CD8-positive, alpha-beta T cell (primary cell): ENCODE measurements at regions of chr21 and their contacts with region 1.

Region 1: GRCh38 chr21:44927587-44928461 is 7.1 kb upstream of the ITGB2 start:
- DNase-seq: peak; percentile 59 to 96 (median 90)
- ATAC-seq: peak; percentile 78
- H3K4me3 ChIP-seq: peak overlapping the region; percentile 68 to 92
- H3K4me3 Mint-ChIP-seq: peak overlapping the region; percentile 91
- H3K27ac ChIP-seq: peak overlapping the region; percentile 75 to 79
- H3K27ac Mint-ChIP-seq: peak overlapping the region; percentile 96
- H3K4me1 ChIP-seq: peaks cover 82% of the 10 kb centered on the region
- H3K4me1 Mint-ChIP-seq: peaks cover 76% of the 10 kb centered on the region
- H3K27me3 ChIP-seq: no peaks in the 10 kb centered on the region
- H3K27me3 Mint-ChIP-seq: no peaks in the 10 kb centered on the region
- CTCF ChIP-seq: no peak

Region 2: DNA sequence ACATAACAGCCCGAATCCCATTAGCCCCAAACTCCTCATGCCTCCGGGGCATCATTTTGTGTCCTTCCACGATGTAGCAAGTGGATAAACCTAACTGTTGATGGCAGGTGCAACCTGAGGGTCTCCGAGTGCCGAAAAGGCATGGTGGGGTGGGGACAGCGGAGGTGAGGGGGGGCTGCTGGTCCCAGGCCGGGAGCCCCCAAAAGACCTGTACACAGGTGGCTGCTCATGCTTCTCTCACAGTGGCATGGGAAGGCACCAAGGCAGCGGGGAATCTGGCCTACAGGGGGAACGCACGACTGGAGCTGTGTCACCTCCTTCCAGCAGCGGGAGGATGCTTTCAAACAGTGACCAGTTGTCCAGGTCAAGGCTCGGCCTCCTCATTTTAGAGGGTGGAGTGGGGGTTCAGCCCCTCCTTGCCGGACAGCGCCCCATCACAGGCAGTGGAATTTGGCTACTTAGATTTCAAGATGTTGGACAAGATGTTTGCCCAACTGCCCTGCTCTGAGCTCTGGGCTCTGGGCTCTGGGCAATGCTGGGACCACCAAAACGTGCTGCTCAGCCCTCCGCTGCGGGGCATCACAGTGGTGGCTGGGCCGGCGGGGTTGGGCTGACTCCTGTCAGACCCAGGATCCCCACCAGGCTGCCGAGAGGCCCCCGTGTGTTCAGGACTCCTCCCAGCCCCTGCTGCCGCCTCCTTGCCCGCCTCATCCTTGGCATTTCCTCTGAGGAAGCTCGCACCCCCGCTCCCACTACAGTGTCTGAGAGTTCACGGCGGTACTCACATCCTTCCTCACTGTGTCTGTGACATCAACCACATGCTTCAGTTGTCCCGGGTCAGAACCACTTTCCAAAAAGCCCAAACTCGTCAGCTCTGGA is 673.8 kb before region 1 on chr21:
- CTCF ChIA-PET with region 1: no interaction called
- POLR2A ChIA-PET with region 1: no interaction called
- intact Hi-C with region 1: no loop called
- DNase-seq: no peak
- ATAC-seq: no peak
- H3K4me3 ChIP-seq: no peak overlapping the region
- H3K4me3 Mint-ChIP-seq: no peak overlapping the region
- H3K27ac ChIP-seq: no peak overlapping the region
- H3K27ac Mint-ChIP-seq: no peak overlapping the region
- H3K4me1 ChIP-seq: no peaks in the 10 kb centered on the region
- H3K4me1 Mint-ChIP-seq: no peaks in the 10 kb centered on the region
- H3K27me3 ChIP-seq: peaks cover 0 to 2% of the 10 kb centered on the region in 2 experiments
- H3K27me3 Mint-ChIP-seq: peaks cover 3% of the 10 kb centered on the region
- CTCF ChIP-seq: no peak

Region 3: GRCh38 chr21:44657635-44658540 is 269.9 kb before region 1 on chr21 and contains the start of gene KRTAP12-3:
- CTCF ChIA-PET with region 1: no interaction called
- POLR2A ChIA-PET with region 1: no interaction called
- intact Hi-C with region 1: loop called in 1 of 2 experiments (anchors 2 kb)
- DNase-seq: peak; percentile 45 to 95 (median 70)
- ATAC-seq: peak; percentile 64
- H3K4me3 ChIP-seq: peak within 1 kb of the TSS; percentile 9 to 31
- H3K4me3 Mint-ChIP-seq: peak within 1 kb of the TSS; percentile 66
- H3K27ac ChIP-seq: peak within 1 kb of the TSS; percentile 63 to 88
- H3K27ac Mint-ChIP-seq: peak within 1 kb of the TSS; percentile 96
- H3K4me1 ChIP-seq: peaks cover 65% of the 10 kb centered on the region
- H3K4me1 Mint-ChIP-seq: peaks cover 68% of the 10 kb centered on the region
- H3K27me3 ChIP-seq: no peaks in the 10 kb centered on the region
- H3K27me3 Mint-ChIP-seq: no peaks in the 10 kb centered on the region
- CTCF ChIP-seq: no peak
- total RNA-seq, gene KRTAP12-3: 1.3 TPM in 1 of 2 experiments, not detected in the other

Region 4: GRCh38 chr21:44801468-44802395 is 126.1 kb before region 1 on chr21 and contains the start of gene UBE2G2:
- CTCF ChIA-PET with region 1: interaction called, 31 read pairs
- POLR2A ChIA-PET with region 1: interaction called, 11 read pairs
- intact Hi-C with region 1: loop called in 1 of 2 experiments (anchors 1 kb)
- DNase-seq: peak; percentile 70 to 91 (median 85)
- ATAC-seq: peak; percentile 88
- H3K4me3 ChIP-seq: peak within 1 kb of the TSS; percentile 76 to 95
- H3K4me3 Mint-ChIP-seq: peak within 1 kb of the TSS; percentile 95
- H3K27ac ChIP-seq: peak within 1 kb of the TSS; percentile 64 to 71
- H3K27ac Mint-ChIP-seq: peak within 1 kb of the TSS; percentile 92
- H3K4me1 ChIP-seq: peaks cover 20% of the 10 kb centered on the region
- H3K4me1 Mint-ChIP-seq: peaks cover 47% of the 10 kb centered on the region
- H3K27me3 ChIP-seq: no peaks in the 10 kb centered on the region
- H3K27me3 Mint-ChIP-seq: no peaks in the 10 kb centered on the region
- CTCF ChIP-seq: peak; percentile 52
- total RNA-seq, gene UBE2G2: 88.8 to 89.1 TPM

Region 5: GRCh38 chr21:44854664-44855446 is 73.0 kb before region 1 on chr21:
- CTCF ChIA-PET with region 1: interaction called, 4 read pairs
- POLR2A ChIA-PET with region 1: no interaction called
- intact Hi-C with region 1: loop called in 1 of 2 experiments (anchors 2 kb)
- DNase-seq: peak in 4 of 9 experiments; percentile 34 to 47 (median 44)
- ATAC-seq: peak; percentile 67
- H3K4me3 ChIP-seq: no peak overlapping the region
- H3K4me3 Mint-ChIP-seq: peak overlapping the region; percentile 49
- H3K27ac ChIP-seq: peak overlapping the region; percentile 15 to 43
- H3K27ac Mint-ChIP-seq: peak overlapping the region; percentile 92
- H3K4me1 ChIP-seq: peaks cover 28% of the 10 kb centered on the region
- H3K4me1 Mint-ChIP-seq: peaks cover 33% of the 10 kb centered on the region
- H3K27me3 ChIP-seq: no peaks in the 10 kb centered on the region
- H3K27me3 Mint-ChIP-seq: no peaks in the 10 kb centered on the region
- CTCF ChIP-seq: no peak

Region 6: DNA sequence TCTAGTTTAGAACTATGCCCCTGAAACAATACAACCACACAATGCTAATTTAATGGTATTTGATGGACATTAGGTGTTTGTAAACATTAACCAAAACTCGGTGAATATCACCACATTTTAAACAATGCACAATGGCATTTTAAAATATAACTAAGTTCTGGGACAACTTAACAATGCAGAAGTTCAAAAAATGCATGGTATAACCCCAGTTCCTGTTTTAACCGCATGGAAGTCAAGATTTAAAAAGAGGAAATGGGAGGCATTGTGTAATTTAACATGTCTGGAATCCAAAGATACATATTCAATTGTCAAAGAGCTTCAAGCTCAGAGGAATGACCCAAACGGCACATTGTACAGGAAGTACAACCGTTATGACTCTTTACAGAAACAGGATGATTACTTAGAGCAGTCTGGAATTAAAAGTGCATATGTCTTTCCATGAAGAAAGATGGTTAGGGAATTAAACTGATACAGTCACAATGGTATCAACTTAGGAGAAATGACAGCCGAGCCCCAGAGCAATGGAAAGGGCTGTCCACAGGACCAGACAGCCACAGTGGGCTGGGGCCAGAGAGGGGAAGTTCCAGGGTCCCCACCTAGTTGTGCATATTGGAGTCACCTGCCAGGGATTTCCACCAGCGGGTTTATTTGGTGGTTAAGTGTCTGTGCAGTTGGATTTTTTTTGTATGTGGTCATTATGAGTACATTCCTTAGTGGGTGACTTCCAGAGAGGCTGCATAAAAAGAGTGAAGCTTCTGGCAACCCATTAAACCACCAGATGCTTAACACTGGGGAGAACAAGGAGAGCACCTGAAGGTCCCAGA is 46.9 kb before region 1 on chr21:
- CTCF ChIA-PET with region 1: interaction called, 42 read pairs
- POLR2A ChIA-PET with region 1: interaction called, 30 read pairs
- intact Hi-C with region 1: no loop called
- DNase-seq: peak in 2 of 9 experiments; percentile 38 to 61
- ATAC-seq: peak; percentile 59
- H3K4me3 ChIP-seq: no peak overlapping the region
- H3K4me3 Mint-ChIP-seq: peak overlapping the region; percentile 13
- H3K27ac ChIP-seq: no peak overlapping the region
- H3K27ac Mint-ChIP-seq: peak overlapping the region; percentile 84
- H3K4me1 ChIP-seq: peaks cover 24% of the 10 kb centered on the region
- H3K4me1 Mint-ChIP-seq: peaks cover 25% of the 10 kb centered on the region
- H3K27me3 ChIP-seq: no peaks in the 10 kb centered on the region
- H3K27me3 Mint-ChIP-seq: no peaks in the 10 kb centered on the region
- CTCF ChIP-seq: no peak

Region 7: DNA sequence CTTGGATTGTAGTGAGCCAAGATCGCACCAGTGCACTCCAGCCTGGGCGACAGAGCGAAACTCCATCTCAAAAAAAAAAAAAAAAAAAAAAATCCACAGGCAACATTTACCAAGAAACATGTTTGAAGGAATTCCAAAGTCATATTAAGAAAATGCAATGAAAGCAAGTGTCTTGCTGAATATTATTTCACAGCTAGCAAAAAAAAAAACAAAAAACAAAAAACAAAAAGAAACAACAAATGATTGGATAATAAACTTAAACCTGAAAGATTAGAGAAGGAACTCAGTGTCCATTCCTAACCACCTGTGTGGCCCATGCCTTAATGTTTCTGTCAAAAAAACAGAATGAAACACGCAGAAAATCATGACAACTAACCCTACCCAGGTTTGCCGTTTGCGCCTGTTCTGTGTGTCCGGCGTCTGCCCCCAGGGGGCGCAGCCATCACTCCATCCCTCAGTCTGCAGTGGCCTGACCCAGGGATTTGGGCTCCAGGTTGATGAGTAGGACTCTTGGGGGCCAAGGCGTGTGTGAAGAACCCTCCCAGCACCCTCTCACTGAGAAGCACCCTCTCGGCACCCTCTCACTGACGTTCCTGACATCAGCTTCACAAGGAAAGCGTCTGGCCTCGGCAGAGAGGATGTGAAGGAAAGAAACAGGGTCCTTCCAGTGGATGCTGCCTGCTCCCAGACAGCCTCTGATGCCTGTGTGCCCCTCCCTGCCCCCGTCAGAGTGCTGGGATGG is 35.1 kb before region 1 on chr21:
- CTCF ChIA-PET with region 1: interaction called, 169 read pairs
- POLR2A ChIA-PET with region 1: interaction called, 28 read pairs
- intact Hi-C with region 1: loop called (anchors 1 kb)
- DNase-seq: peak; percentile 56 to 86 (median 82)
- ATAC-seq: peak; percentile 90
- H3K4me3 ChIP-seq: no peak overlapping the region
- H3K4me3 Mint-ChIP-seq: no peak overlapping the region
- H3K27ac ChIP-seq: peak overlapping the region in 1 of 2 experiments; percentile 34
- H3K27ac Mint-ChIP-seq: peak overlapping the region; percentile 79
- H3K4me1 ChIP-seq: peaks cover 13% of the 10 kb centered on the region
- H3K4me1 Mint-ChIP-seq: peaks cover 15% of the 10 kb centered on the region
- H3K27me3 ChIP-seq: no peaks in the 10 kb centered on the region
- H3K27me3 Mint-ChIP-seq: no peaks in the 10 kb centered on the region
- CTCF ChIP-seq: peak; percentile 96

Region 8: GRCh38 chr21:44911389-44912157 is 16.3 kb before region 1 on chr21:
- CTCF ChIA-PET with region 1: interaction called, 65 read pairs
- POLR2A ChIA-PET with region 1: interaction called, 140 read pairs
- intact Hi-C with region 1: loop called (anchors 1 kb)
- DNase-seq: peak; percentile 26 to 86 (median 71)
- ATAC-seq: peak; percentile 74
- H3K4me3 ChIP-seq: peak overlapping the region; percentile 41 to 42
- H3K4me3 Mint-ChIP-seq: peak overlapping the region; percentile 70
- H3K27ac ChIP-seq: peak overlapping the region; percentile 73 to 79
- H3K27ac Mint-ChIP-seq: peak overlapping the region; percentile 92
- H3K4me1 ChIP-seq: peaks cover 96% of the 10 kb centered on the region
- H3K4me1 Mint-ChIP-seq: peaks cover 79% of the 10 kb centered on the region
- H3K27me3 ChIP-seq: no peaks in the 10 kb centered on the region
- H3K27me3 Mint-ChIP-seq: no peaks in the 10 kb centered on the region
- CTCF ChIP-seq: peak; percentile 66

Region 9: DNA sequence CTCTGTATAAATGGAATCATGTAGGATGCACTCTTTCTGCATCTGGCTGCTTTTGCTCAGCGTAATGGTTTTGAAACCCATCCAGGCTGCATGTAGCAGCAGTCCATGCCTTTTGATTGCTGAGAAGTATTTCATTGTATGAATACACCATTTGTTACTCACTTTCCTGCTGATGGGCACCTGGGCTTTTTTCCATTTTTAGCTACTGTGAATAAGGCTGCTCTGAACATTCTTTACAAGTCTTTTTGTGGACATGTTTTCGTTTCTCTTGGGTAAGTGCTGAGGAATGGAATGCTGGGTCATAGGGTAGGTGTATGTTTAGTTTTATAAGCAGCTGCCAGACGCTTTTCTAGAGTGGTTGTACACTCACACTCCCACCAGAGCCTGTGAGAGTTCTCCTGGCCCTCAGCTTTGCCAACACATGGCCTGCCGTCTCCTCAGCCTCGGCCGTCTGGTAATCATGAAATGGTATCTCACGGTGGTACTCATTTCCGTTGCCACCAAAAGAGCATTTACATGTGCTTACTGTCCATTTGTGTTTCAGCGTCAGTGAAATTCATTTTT is 34.7 kb after region 1 on chr21:
- CTCF ChIA-PET with region 1: no interaction called
- POLR2A ChIA-PET with region 1: no interaction called
- intact Hi-C with region 1: no loop called
- DNase-seq: no peak
- ATAC-seq: no peak
- H3K4me3 ChIP-seq: no peak overlapping the region
- H3K4me3 Mint-ChIP-seq: no peak overlapping the region
- H3K27ac ChIP-seq: no peak overlapping the region
- H3K27ac Mint-ChIP-seq: no peak overlapping the region
- H3K4me1 ChIP-seq: peaks cover 30% of the 10 kb centered on the region
- H3K4me1 Mint-ChIP-seq: peaks cover 30% of the 10 kb centered on the region
- H3K27me3 ChIP-seq: no peaks in the 10 kb centered on the region
- H3K27me3 Mint-ChIP-seq: no peaks in the 10 kb centered on the region
- CTCF ChIP-seq: no peak